ENCODE measurements at regions of chr1 and their contacts with region 1.

Region 1: DNA sequence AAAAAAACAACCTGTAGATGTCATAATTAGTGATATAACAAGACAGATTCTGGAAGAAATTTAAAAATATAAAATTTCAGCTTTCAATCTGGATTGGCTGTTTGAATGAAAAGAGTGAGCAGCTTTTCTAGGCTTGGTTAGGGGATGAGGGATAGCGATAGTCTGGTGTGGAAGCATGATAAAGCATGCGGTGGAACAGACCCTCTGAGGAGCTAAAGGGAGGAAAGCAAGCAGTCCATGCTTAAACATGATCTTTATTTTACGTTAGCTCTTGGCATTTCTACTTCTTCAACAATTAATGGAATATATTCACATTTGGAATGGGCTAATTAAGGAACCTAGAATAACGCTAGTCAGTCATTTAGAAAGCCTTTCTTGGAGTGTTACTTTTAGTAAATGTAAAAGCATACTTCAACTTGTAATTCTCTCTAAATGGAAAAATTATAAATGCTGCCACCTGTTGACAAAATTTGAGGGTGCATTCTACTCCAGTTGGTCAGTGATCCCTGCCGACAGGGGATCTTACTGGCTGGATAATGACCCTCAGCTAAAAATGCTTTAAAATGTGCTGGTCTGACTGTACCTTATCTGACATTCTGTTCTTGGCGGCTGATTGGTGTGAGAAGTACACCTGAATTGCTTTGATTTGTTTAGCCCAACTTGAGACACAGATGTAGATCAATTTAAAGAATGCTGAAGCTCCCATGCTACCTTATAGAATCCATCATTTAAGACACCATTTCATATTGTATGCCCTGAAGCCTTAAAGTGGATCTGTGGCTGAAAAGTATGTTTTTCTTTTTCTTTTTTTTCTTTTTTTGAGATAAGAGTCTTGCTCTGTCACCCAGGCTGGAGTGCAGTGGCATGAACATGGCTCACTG is 61.2 kb downstream of the AK4 start:
- DNase-seq: peak; percentile 11 to 17
- H3K4me3 ChIP-seq: no peak overlapping the region
- H3K27ac ChIP-seq: no peak overlapping the region
- H3K4me1 ChIP-seq: no peaks in the 10 kb centered on the region
- H3K27me3 ChIP-seq: no peaks in the 10 kb centered on the region
- CTCF ChIP-seq: peak in 5 of 6 experiments; percentile 37 to 71 (median 59)
- POLR2A ChIP-seq: no peak

Region 2: GRCh38 chr1:65067491-65068201 is 141.6 kb before region 1 on chr1:
- intact Hi-C with region 1: loop called (anchors 10 kb)
- DNase-seq: peak; percentile 72 to 73
- H3K4me3 ChIP-seq: peak overlapping the region; percentile 42 to 88 (median 77)
- H3K27ac ChIP-seq: peak overlapping the region; percentile 98 to 100 (median 99)
- H3K4me1 ChIP-seq: peaks cover 13 to 23% of the 10 kb centered on the region in 2 donors
- H3K27me3 ChIP-seq: no peaks in the 10 kb centered on the region
- CTCF ChIP-seq: no peak
- POLR2A ChIP-seq: peak; percentile 48 to 79

Measured in thyroid gland (tissue), 4 donors.